ENCODE measurements at regions of chr7 and their contacts with region 1.

Region 1: DNA sequence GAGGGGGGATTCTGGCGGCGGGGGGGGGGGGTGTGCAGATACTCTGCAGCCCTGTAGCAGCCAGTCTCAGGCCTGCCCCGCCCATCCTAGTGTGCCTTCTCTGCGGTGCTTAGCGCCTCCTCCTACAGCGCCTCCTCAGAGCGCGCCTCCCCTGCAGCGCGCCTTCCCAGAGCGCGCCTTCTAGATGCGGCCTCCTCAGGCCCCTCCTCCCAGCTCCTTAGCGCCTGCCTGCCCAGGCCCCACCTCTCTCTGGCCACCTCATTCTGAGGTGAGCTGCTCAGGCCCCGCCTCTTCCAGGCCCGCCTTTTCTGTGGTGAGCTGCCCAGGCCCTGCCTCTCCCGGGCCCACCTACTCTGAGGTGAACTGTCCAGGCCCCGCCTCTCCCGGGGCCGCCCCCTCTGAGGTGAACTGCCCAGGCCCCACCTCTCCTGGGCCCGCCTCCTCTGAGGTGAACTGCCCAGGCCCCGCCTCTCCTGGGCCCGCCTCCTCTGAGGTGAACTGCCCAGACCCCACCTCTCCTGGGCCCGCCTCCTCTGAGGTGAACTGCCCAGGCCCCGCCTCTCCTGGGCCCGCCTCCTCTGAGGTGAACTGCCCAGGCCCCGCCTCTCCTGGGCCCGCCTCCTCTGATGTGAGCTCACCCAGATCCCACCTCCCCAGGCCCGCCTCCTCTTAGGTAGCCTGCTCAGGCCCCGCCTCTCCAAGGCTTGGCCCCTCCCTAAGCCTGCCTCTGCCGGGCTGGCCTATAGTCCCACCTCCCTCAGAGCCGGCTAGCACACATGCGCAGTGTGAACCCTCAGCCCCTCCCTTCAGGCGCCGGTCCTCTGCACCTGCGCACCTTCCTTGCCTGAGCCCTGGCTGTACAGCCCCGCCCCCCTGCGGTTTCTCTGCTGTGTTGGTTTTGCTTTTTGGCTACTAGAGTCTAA is 2.1 kb upstream of the SGCE start:
- DNase-seq: peak; percentile 83 to 97 (median 95)
- ATAC-seq: peak; percentile 88
- H3K4me3 ChIP-seq: peak overlapping the region; percentile 85
- H3K4me3 Mint-ChIP-seq: peak overlapping the region; percentile 83 to 91 (median 88)
- H3K27ac ChIP-seq: no peak overlapping the region
- H3K27ac Mint-ChIP-seq: peak overlapping the region in 6 of 9 donors; percentile 17 to 84 (median 54)
- H3K4me1 ChIP-seq: peaks cover 15 to 16% of the 10 kb centered on the region in 2 donors
- H3K4me1 Mint-ChIP-seq: peaks cover 8 to 24% (median 17%) of the 10 kb centered on the region in 7 donors
- H3K27me3 ChIP-seq: peaks cover 14 to 21% of the 10 kb centered on the region in 2 donors
- H3K27me3 Mint-ChIP-seq: peaks cover 11 to 28% (median 23%) of the 10 kb centered on the region in 5 donors

Region 2: GRCh38 chr7:94004024-94004951 is 653.7 kb before region 1 on chr7 and contains the start of gene BET1:
- CTCF ChIA-PET with region 1: no interaction called
- POLR2A ChIA-PET with region 1: no interaction called
- intact Hi-C with region 1: loop called (anchors 1 to 5 kb)
- DNase-seq: peak; percentile 87 to 96 (median 92)
- ATAC-seq: peak; percentile 98
- H3K4me3 ChIP-seq: peak within 1 kb of the TSS; percentile 75
- H3K4me3 Mint-ChIP-seq: peak within 1 kb of the TSS; percentile 88 to 100 (median 99)
- H3K27ac ChIP-seq: peak within 1 kb of the TSS; percentile 91
- H3K27ac Mint-ChIP-seq: peak within 1 kb of the TSS; percentile 95 to 100 (median 99)
- H3K4me1 ChIP-seq: peaks cover 3 to 17% of the 10 kb centered on the region in 2 donors
- H3K4me1 Mint-ChIP-seq: peaks cover 22 to 56% (median 51%) of the 10 kb centered on the region in 7 donors
- H3K27me3 ChIP-seq: no peaks in the 10 kb centered on the region
- H3K27me3 Mint-ChIP-seq: peaks cover 0 to 28% (median 11%) of the 10 kb centered on the region in 5 donors
- total RNA-seq, gene BET1: 9.9 to 37.6 (median 25.2) TPM

Region 3: DNA sequence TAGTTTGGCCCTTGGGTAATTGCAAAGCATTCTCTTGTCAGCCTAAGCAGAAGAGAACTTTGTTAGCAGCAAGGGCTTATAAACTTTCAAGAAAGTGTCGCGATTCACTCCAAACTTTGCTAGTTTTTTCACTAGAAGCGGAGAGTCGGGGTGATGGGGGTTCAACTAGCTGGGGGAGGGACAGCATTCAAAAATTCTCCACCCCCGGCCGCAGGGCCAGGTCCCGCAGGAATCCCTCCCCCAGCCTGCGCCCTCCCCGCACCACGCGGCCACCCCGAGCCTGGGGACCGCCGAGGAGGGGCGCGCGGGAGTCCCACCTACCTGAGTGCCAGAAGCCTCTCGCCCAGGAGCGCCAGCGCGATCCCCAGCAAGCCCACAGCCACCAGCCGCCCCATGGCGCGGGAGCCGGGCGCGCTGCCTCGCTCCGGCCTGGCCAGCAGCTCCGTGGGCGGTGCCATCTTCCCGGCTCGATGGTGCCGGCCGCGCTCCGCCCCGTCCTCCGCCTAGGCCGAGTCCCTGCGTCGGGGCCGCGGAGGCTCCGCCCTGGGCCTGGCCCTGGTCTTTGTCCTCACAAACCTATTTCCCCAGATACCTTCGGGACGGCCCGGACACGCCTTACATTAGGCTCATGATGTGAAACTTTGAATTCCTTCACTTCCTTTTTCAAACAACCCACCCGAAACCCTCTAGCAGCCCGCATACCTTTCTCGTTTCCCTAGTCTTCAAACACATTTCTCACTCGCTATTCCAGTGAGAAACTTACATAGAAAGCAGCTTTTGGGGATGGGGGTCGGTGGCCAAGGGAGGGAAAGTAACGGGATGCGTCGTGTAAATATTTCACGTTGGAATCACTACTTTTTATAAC is 776.8 kb after region 1 on chr7 and contains the start of gene PON2:
- CTCF ChIA-PET with region 1: no interaction called
- POLR2A ChIA-PET with region 1: no interaction called
- intact Hi-C with region 1: loop called in 1 of 2 experiments (anchors 5 kb)
- DNase-seq: peak; percentile 7 to 56 (median 41)
- ATAC-seq: peak; percentile 90
- H3K4me3 ChIP-seq: peak within 1 kb of the TSS; percentile 55
- H3K4me3 Mint-ChIP-seq: peak within 1 kb of the TSS; percentile 84 to 98 (median 90)
- H3K27ac ChIP-seq: peak within 1 kb of the TSS; percentile 60
- H3K27ac Mint-ChIP-seq: peak within 1 kb of the TSS; percentile 66 to 95 (median 88)
- H3K4me1 ChIP-seq: peaks cover 0 to 3% of the 10 kb centered on the region in 2 donors
- H3K4me1 Mint-ChIP-seq: peaks cover 3 to 18% (median 17%) of the 10 kb centered on the region in 7 donors
- H3K27me3 ChIP-seq: no peaks in the 10 kb centered on the region
- H3K27me3 Mint-ChIP-seq: peaks cover 0 to 17% (median 3%) of the 10 kb centered on the region in 5 donors
- total RNA-seq, gene PON2: 2.9 to 11.3 (median 8.3) TPM

Measured in naive thymus-derived CD4-positive, alpha-beta T cell (primary cell).